ENCODE measurements at regions of chr4 and their contacts with region 1.

Region 1: GRCh38 chr4:186297013-186297645 is 31.1 kb downstream of the F11 start:
- DNase-seq: no peak
- H3K4me3 Mint-ChIP-seq: no peak overlapping the region
- H3K27ac Mint-ChIP-seq: no peak overlapping the region
- H3K4me1 Mint-ChIP-seq: peaks cover 2% of the 10 kb centered on the region
- H3K27me3 Mint-ChIP-seq: peaks cover 33% of the 10 kb centered on the region

Region 2: DNA sequence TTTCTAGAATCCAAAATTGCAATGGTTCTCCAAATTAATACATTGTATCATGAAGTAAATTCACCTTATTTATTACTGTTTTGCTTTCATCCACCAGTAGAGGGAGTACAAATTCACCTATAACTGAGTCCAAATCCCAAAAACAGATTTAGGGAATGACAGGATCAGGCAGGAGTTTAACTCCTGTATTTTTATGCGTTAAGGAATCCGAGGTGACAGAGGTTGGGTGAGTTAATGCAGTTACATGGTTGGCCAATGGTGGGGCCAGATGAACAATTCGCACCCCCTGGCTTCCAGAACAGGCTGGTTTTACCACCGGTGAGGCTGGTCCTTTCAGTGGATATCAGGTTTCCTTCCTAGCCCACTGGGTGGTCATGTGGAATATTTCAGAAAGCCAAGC is 175.8 kb after region 1 on chr4:
- CTCF ChIA-PET with region 1: no interaction called
- intact Hi-C with region 1: loop called (anchors 5 kb)
- DNase-seq: no peak
- H3K4me3 Mint-ChIP-seq: no peak overlapping the region
- H3K27ac Mint-ChIP-seq: no peak overlapping the region
- H3K4me1 Mint-ChIP-seq: no peaks in the 10 kb centered on the region
- H3K27me3 Mint-ChIP-seq: peaks cover 9% of the 10 kb centered on the region

Region 3: GRCh38 chr4:186500721-186501304 is 203.7 kb after region 1 on chr4:
- CTCF ChIA-PET with region 1: no interaction called
- intact Hi-C with region 1: no loop called
- DNase-seq: no peak
- H3K4me3 Mint-ChIP-seq: no peak overlapping the region
- H3K27ac Mint-ChIP-seq: no peak overlapping the region
- H3K4me1 Mint-ChIP-seq: no peaks in the 10 kb centered on the region
- H3K27me3 Mint-ChIP-seq: peaks cover 2% of the 10 kb centered on the region

Region 4: GRCh38 chr4:186725469-186726425 is 428.6 kb after region 1 on chr4:
- CTCF ChIA-PET with region 1: no interaction called
- intact Hi-C with region 1: loop called (anchors 5 kb)
- DNase-seq: peak; percentile 48
- H3K4me3 Mint-ChIP-seq: peak overlapping the region; percentile 48
- H3K27ac Mint-ChIP-seq: no peak overlapping the region
- H3K4me1 Mint-ChIP-seq: peaks cover 21% of the 10 kb centered on the region
- H3K27me3 Mint-ChIP-seq: peaks cover 60% of the 10 kb centered on the region